B cell (primary cell): ENCODE measurements at regions of chr17 and their contacts with region 1.

Region 1: DNA sequence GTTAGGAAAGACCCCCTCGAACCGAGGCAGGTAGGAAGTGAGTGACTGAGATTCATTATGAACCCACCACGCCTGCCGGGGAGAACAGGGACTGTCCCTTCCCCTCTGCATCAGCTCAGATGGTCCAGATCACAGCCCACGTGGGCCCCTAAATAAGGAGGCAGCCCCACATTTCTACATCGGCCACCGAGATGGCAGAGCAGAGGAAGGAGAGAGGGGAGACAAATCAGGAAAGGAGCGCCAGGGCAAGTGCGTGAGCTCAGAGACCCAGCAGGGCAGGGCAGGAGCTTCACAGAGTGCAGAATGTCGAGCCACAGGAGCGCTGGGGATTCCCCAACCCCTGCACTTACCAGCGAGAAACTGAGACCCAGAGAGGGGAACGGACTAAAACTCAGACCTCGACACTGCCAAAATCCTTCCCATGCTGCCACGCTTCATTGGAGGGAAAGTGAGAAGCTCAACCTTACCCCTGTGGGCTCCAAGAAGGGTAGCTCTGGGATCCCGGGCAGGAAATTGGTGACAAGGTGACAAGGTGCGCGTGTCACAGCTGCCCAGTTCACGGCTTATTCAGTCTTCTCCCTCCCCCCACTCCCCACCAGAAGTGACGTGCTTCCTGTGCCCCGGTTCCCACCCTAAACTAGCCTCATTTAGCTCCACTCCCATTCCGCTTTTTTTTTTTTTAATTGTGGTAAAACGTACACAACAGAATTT is at the start of gene ICAM2:
- DNase-seq: peak; percentile 97
- ATAC-seq: peak; percentile 83
- H3K4me3 ChIP-seq: peak within 1 kb of the TSS; percentile 70 to 87 (median 75)
- H3K4me3 Mint-ChIP-seq: peak within 1 kb of the TSS; percentile 98
- H3K27ac ChIP-seq: peak within 1 kb of the TSS; percentile 99
- H3K27ac Mint-ChIP-seq: peak within 1 kb of the TSS; percentile 99
- H3K4me1 ChIP-seq: peaks cover 59 to 66% of the 10 kb centered on the region in 2 donors
- H3K4me1 Mint-ChIP-seq: peaks cover 73% of the 10 kb centered on the region
- H3K27me3 ChIP-seq: no peaks in the 10 kb centered on the region
- H3K27me3 Mint-ChIP-seq: no peaks in the 10 kb centered on the region
- CTCF ChIP-seq: no peak
- total RNA-seq, gene ICAM2: 48.7 and 55.7 TPM in 2 replicates

Region 2: DNA sequence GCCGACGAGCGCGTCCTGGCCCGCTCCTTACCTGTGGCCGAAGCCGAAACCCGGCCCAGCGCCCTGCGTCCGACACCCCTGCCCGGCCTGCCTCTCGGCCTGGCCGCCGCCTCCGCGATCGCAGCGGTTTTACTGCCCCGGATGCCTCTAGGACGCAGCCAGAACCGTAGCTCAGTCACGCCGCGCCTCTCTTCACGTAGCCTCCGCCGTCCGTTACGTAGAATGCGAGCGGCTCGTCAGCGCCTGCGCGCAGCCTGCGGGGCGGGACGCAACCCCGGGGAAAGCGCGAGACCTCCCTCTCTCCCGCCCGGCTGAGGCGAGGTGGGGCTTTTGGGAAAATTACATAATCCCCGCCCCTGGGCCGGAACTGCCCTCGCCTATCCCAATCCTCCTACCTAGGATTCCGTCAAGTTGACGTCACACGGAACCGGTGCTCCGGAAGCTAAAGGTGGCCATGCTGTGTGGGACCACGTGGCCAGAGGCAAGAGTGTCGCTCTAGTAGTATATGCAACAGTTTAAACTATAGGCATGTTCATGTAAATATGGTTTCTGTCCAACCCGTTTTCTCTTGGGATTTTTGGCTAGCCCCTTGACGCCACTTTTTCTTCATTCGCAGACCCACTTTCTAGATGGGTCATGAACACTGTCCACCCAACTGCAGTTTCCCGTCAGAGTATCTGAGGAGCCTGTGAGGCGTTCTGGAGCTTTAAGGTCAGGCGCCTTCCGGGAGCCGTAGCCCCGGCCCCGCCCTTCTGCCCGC is 246.7 kb before region 1 on chr17 and contains the start of gene CCDC47:
- CTCF ChIA-PET with region 1: no interaction called
- POLR2A ChIA-PET with region 1: no interaction called
- intact Hi-C with region 1: loop called (anchors 5 kb)
- DNase-seq: peak; percentile 99
- ATAC-seq: peak; percentile 78
- H3K4me3 ChIP-seq: peak within 1 kb of the TSS; percentile 78 to 99 (median 90)
- H3K4me3 Mint-ChIP-seq: peak within 1 kb of the TSS; percentile 98
- H3K27ac ChIP-seq: peak within 1 kb of the TSS; percentile 78 to 94
- H3K27ac Mint-ChIP-seq: peak within 1 kb of the TSS; percentile 99
- H3K4me1 ChIP-seq: peaks cover 28 to 34% of the 10 kb centered on the region in 2 donors
- H3K4me1 Mint-ChIP-seq: peaks cover 51% of the 10 kb centered on the region
- H3K27me3 ChIP-seq: no peaks in the 10 kb centered on the region
- H3K27me3 Mint-ChIP-seq: no peaks in the 10 kb centered on the region
- CTCF ChIP-seq: no peak
- total RNA-seq, gene CCDC47: 36.2 and 39.7 TPM in 2 replicates

Region 3: GRCh38 chr17:63911657-63912426 is 108.4 kb before region 1 on chr17:
- CTCF ChIA-PET with region 1: interaction called, 164 read pairs
- POLR2A ChIA-PET with region 1: interaction called, 6 read pairs
- intact Hi-C with region 1: no loop called
- DNase-seq: peak; percentile 77
- ATAC-seq: peak; percentile 55
- H3K4me3 ChIP-seq: no peak overlapping the region
- H3K4me3 Mint-ChIP-seq: no peak overlapping the region
- H3K27ac ChIP-seq: no peak overlapping the region
- H3K27ac Mint-ChIP-seq: peak overlapping the region; percentile 50
- H3K4me1 ChIP-seq: peaks cover 28 to 41% of the 10 kb centered on the region in 2 donors
- H3K4me1 Mint-ChIP-seq: peaks cover 41% of the 10 kb centered on the region
- H3K27me3 ChIP-seq: peaks cover 0 to 5% (median 0%) of the 10 kb centered on the region in 4 experiments
- H3K27me3 Mint-ChIP-seq: peaks cover 8% of the 10 kb centered on the region
- CTCF ChIP-seq: peak; percentile 82

Region 4: GRCh38 chr17:63931099-63931561 is 89.1 kb before region 1 on chr17:
- CTCF ChIA-PET with region 1: interaction called, 9 read pairs
- POLR2A ChIA-PET with region 1: interaction called, 34 read pairs
- intact Hi-C with region 1: loop called (anchors 5 kb)
- DNase-seq: peak; percentile 77
- ATAC-seq: peak; percentile 39
- H3K4me3 ChIP-seq: peak overlapping the region; percentile 80 to 100 (median 97)
- H3K4me3 Mint-ChIP-seq: peak overlapping the region; percentile 99
- H3K27ac ChIP-seq: peak overlapping the region; percentile 83 to 85
- H3K27ac Mint-ChIP-seq: peak overlapping the region; percentile 97
- H3K4me1 ChIP-seq: peaks cover 72 to 85% of the 10 kb centered on the region in 2 donors
- H3K4me1 Mint-ChIP-seq: peaks cover 86% of the 10 kb centered on the region
- H3K27me3 ChIP-seq: no peaks in the 10 kb centered on the region
- H3K27me3 Mint-ChIP-seq: no peaks in the 10 kb centered on the region
- CTCF ChIP-seq: no peak

Region 5: DNA sequence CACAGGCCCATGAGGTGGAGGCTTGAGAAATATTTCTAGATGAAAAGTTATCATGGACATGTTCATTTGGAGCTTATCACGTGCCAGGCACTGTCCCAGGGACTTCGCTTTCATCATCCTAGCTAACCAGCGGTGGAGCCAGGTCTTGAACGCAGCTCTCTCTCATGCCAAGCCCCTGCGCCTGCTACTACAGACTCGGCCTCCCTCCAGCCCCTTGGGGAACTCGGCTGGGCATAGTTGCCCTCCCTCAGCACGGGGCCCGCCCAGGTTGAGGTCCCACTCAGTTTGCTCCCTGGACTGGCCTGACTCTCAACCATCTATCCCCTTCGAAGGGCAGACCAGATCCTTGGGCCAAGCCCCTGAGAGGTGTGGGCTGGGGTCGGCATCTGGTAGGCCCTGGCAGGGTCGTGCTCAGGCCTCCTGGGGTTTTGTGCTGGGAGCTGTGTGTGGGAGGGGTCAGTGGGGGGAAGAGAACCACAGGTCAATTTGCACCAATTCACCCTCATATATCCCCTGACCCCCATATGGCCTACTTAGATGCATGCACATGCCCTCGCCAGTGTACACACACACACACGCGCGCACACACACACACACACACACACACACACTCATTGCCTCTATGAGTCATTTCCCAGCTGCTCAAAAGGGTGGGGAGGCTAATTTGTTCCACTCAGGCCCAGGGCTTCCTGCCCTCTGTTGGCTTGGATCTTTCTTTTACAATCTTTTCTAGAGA is 35.4 kb before region 1 on chr17:
- CTCF ChIA-PET with region 1: interaction called, 58 read pairs
- POLR2A ChIA-PET with region 1: interaction called, 4 read pairs
- intact Hi-C with region 1: loop called (anchors 1 kb)
- DNase-seq: no peak
- ATAC-seq: peak; percentile 80
- H3K4me3 ChIP-seq: no peak overlapping the region
- H3K4me3 Mint-ChIP-seq: no peak overlapping the region
- H3K27ac ChIP-seq: no peak overlapping the region
- H3K27ac Mint-ChIP-seq: no peak overlapping the region
- H3K4me1 ChIP-seq: peaks cover 8 to 17% of the 10 kb centered on the region in 2 donors
- H3K4me1 Mint-ChIP-seq: peaks cover 19% of the 10 kb centered on the region
- H3K27me3 ChIP-seq: no peaks in the 10 kb centered on the region
- H3K27me3 Mint-ChIP-seq: no peaks in the 10 kb centered on the region
- CTCF ChIP-seq: no peak

Region 6: GRCh38 chr17:64005734-64006167 is 14.5 kb before region 1 on chr17:
- CTCF ChIA-PET with region 1: interaction called, 12 read pairs
- POLR2A ChIA-PET with region 1: interaction called, 4 read pairs
- intact Hi-C with region 1: no loop called
- DNase-seq: no peak
- ATAC-seq: no peak
- H3K4me3 ChIP-seq: no peak overlapping the region
- H3K4me3 Mint-ChIP-seq: no peak overlapping the region
- H3K27ac ChIP-seq: no peak overlapping the region
- H3K27ac Mint-ChIP-seq: no peak overlapping the region
- H3K4me1 ChIP-seq: peaks cover 27 to 41% of the 10 kb centered on the region in 2 donors
- H3K4me1 Mint-ChIP-seq: peaks cover 30% of the 10 kb centered on the region
- H3K27me3 ChIP-seq: no peaks in the 10 kb centered on the region
- H3K27me3 Mint-ChIP-seq: no peaks in the 10 kb centered on the region
- CTCF ChIP-seq: no peak